ENCODE measurements at regions of chr3 and their contacts with region 1.

Region 1: DNA sequence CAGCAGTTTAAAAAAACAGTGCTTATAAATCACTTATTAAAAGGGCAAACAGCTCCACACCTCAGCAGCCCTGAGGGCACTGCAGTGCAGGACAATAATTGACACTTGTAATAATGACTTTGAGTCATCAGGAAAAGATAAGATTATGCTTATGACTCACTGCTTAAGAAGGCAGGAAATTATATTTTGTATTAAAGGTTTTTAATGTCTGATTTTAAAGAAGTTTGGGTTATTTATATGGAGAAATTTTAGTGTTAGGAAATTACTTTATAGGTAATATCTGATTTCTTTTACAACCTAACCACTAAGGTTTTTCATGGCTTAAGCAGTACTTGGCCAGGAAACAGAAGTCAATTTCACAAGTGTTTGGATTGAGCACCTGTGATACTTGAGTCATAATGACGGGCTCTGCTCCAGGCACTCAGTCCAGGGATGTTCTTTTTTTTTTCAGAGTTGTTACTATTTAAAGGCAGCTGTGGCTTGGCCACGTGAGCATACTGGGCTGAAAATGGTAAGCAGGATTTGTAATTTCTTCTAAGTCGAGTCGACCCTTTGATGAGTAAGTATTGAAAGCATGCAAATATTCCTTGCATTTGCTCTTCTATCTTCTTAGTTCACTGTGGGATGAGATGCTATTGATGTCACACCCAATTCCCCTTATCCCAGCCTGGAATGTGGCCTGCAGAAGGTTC is 21.6 kb upstream of the SLC6A20 start:
- DNase-seq: peak; percentile 97
- ATAC-seq: peak; percentile 74
- H3K4me3 ChIP-seq: no peak overlapping the region; the same call in 1 of the 2 replicates
- H3K27ac ChIP-seq: peak overlapping the region; percentile 85
- H3K4me1 ChIP-seq: peaks cover 40% of the 10 kb centered on the region
- H3K27me3 ChIP-seq: no peaks in the 10 kb centered on the region
- CTCF ChIP-seq: no peak

Region 2: DNA sequence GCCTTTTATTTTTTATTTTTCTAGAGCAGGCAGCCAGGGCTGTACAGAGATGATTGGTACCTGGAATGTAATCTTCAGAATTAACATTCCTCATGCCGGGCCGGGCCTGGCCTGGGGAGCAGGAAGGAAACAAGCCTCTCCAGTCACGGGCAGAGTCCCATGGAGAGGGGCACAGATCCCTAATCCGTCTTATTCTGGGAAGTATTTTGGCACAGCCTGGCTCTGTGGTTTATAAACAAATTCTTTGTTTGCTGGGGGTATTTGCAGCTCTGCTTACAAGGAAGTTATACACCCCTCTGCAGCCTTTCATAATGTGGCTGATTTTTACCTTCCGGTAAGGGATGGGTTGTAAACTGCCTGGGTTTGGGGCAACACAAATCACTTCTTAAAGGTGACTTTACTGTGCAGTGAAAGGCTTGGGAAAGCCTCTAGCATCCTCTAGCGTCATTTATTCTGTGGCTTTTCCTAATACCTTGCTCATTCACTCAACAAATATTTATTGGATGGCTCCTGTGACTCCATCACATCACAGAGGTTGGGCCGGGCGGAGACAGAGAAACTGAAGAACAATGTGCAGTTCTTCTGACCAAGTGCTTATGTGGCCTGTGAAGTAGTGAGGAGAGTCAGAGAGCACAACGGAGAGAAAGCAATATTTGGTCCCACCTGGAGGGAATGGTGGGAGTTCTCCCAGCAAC is 24.3 kb before region 1 on chr3:
- CTCF ChIA-PET with region 1: interaction called, 5 read pairs
- POLR2A ChIA-PET with region 1: no interaction called
- intact Hi-C with region 1: loop called (anchors 2 kb)
- DNase-seq: peak; percentile 72
- ATAC-seq: peak; percentile 95
- H3K4me3 ChIP-seq: no peak overlapping the region
- H3K27ac ChIP-seq: peak overlapping the region; percentile 51
- H3K4me1 ChIP-seq: peaks cover 13% of the 10 kb centered on the region; the same call in 1 of the 2 replicates
- H3K27me3 ChIP-seq: no peaks in the 10 kb centered on the region
- CTCF ChIP-seq: peak; percentile 51